Esophagus squamous epithelium (tissue), 5 donors: ENCODE measurements at regions of chr7 and their contacts with region 1.

Region 1: DNA sequence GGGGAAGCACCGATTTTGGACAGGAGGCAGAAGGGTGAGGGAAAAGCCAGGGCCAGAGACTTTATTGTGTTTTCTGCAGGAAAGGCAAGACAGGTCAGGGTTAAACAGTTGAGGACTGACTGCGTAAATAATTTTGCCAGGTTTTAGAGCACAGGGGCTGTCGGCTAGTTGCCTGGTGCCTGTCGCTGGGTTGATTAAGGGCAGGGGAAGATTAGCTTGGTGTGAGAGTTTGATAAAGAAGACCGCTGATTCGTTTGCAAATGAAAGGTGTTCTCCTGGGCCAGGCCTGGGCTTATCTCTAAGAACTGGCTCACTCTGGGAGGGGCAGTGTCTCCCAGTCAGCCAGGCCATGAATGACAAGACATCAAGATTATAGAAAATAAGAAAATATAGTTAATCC is 75.6 kb downstream of the SLC37A3 start:
- DNase-seq: no peak
- H3K4me3 ChIP-seq: no peak overlapping the region
- H3K27ac ChIP-seq: no peak overlapping the region
- H3K4me1 ChIP-seq: peaks cover 7 to 19% (median 12%) of the 10 kb centered on the region in 3 donors
- H3K27me3 ChIP-seq: no peaks in the 10 kb centered on the region
- CTCF ChIP-seq: no peak
- POLR2A ChIP-seq: no peak

Region 2: DNA sequence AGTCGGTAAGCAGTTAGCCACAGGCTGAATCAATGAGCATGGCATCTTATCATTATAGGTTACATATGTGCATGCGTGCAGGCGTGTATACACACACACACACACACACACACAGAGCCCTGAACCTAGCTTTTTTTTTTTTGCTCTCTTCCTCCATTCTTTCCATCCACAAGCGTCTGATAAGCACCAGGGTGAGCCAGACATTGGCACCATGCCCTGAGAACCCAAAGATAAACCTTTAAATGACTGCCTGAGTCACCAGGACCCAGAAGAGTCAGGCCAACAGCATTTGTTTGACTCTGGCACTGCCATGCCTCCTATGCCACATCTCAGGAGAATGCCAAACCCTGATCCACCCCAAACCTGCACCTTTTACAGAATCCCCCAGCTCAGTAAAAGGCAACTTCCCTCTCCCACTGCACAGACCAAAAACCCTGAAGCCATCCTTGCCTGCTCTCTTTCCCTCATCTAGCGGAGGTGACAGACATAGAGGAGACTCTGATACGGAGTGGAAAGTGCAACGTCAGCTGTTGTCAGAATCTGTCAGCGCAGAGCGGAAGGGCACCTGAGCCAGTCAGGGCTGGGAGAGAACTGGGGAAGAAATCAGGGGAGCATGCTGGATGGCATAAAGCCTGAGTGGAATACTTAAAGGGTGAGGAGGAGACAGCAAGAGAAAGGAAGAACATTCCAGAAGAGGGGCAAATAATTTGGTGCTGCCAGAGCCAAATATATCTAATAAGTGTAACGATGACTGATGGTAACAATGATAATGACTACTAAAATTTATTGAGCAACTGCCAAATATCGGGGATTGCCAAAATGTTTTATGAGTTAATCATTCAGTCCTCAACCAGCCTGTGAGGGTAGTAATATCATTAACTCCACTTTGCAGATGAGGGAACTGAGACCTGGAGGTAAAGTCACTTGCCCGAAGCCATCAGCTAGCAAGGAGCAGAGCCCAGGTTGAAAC is 263.2 kb before region 1 on chr7:
- intact Hi-C with region 1: loop called (anchors 5 kb)
- DNase-seq: no peak
- H3K4me3 ChIP-seq: peak overlapping the region in 1 of 4 donors; percentile 4
- H3K27ac ChIP-seq: peak overlapping the region in 3 of 4 donors; percentile 50 to 96 (median 88)
- H3K4me1 ChIP-seq: peaks cover 27 to 48% (median 29%) of the 10 kb centered on the region in 3 donors
- H3K27me3 ChIP-seq: no peaks in the 10 kb centered on the region
- CTCF ChIP-seq: no peak
- POLR2A ChIP-seq: no peak

Region 3: GRCh38 chr7:140284062-140284461 is 38.7 kb before region 1 on chr7:
- intact Hi-C with region 1: no loop called
- DNase-seq: no peak
- H3K4me3 ChIP-seq: no peak overlapping the region
- H3K27ac ChIP-seq: no peak overlapping the region
- H3K4me1 ChIP-seq: no peaks in the 10 kb centered on the region
- H3K27me3 ChIP-seq: no peaks in the 10 kb centered on the region
- CTCF ChIP-seq: no peak
- POLR2A ChIP-seq: no peak